Heart right ventricle (tissue), 16 donors: ENCODE measurements at regions of chr7 and their contacts with region 1.

Region 1: DNA sequence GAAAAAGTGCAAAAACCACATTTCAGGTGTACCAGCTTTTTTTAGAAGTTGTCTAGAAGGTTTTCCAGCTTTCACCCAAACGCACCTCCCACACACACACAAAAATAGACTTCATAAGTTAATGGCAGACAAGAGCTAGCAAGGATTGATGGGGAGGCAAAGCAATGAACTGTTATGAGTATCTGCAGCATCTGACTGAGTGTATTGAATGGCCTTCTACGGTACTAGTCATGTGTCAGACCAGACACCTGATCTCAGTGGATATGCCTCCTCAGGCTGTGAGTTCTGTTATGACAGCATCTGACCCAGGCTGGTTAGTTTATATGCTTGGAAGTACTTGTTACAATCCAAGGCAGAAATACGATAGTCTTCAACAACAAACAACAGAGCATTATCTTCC is 406.1 kb upstream of the AUTS2 start:
- DNase-seq: no peak
- ATAC-seq: no peak
- H3K4me3 ChIP-seq: no peak overlapping the region
- H3K27ac ChIP-seq: no peak overlapping the region
- H3K4me1 ChIP-seq: peaks cover 0 to 5% (median 0%) of the 10 kb centered on the region in 9 donors
- H3K27me3 ChIP-seq: no peaks in the 10 kb centered on the region
- CTCF ChIP-seq: no peak

Region 2: GRCh38 chr7:68917041-68917651 is 275.0 kb before region 1 on chr7:
- intact Hi-C with region 1: loop called in 1 of 10 experiments (anchors 5 kb)
- DNase-seq: no peak
- ATAC-seq: no peak
- H3K4me3 ChIP-seq: no peak overlapping the region
- H3K27ac ChIP-seq: no peak overlapping the region
- H3K4me1 ChIP-seq: no peaks in the 10 kb centered on the region
- H3K27me3 ChIP-seq: peaks cover 0 to 29% (median 4%) of the 10 kb centered on the region in 7 donors
- CTCF ChIP-seq: no peak

Region 3: DNA sequence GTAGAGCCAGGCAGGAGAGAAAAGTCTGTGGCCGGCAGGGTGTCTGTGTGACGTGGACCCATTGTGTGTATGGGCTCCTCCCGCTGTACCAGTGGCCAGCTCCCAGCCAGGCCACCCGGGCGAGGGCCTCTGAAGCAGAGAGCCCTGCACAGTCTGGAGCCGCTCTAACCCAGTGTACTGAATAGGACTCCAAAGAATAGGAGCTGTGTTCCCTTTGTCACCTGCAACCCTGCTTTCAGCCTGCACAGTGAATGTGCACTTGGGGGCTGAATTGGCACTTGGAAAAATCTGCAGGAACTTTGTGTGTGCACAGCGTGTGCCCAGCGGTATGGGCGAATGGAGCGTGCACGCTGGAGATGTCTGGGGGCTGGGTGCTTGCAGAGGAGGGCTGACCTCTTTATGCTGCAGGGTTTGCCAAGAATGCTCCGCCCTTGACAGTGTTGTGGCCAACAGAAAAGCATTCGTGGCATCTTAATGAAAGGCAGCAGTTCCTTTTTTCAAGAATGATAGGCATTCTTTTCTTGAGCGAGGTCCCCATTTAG is 622.4 kb after region 1 on chr7:
- intact Hi-C with region 1: loop called in 1 of 10 experiments (anchors 2 kb)
- DNase-seq: peak; percentile 25 to 36
- ATAC-seq: peak; percentile 74 to 90 (median 79)
- H3K4me3 ChIP-seq: no peak overlapping the region
- H3K27ac ChIP-seq: peak overlapping the region in 1 of 10 donors; percentile 2
- H3K4me1 ChIP-seq: peaks cover 0 to 54% (median 22%) of the 10 kb centered on the region in 9 donors
- H3K27me3 ChIP-seq: no peaks in the 10 kb centered on the region
- CTCF ChIP-seq: no peak